Right ventricle myocardium inferior (tissue), 1 donor: ENCODE measurements at regions of chr19 and their contacts with region 1.

Region 1: DNA sequence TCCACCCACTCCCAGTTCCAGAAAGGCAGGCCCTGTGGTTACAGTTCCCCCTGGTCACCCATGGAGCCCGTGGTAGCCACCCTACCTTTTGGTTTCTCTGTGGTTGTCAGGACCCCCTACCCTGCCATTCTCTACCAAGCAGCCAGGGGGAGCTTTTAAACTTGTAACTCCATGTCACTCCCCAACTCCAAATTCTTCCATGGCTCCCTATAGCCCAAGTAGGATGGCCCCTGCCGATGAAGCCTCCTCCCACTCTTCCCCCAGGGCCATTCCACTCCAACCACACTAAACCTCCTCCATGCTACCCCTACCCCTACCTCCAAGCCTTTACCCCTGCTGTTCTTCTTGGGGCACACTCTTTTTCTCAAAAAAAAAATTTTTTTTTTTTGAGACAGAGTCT is 2.2 kb downstream of the S1PR2 start:
- DNase-seq: no peak
- ATAC-seq: no peak

Region 2: GRCh38 chr19:10191347-10191746 is 37.6 kb before region 1 on chr19:
- intact Hi-C with region 1: no loop called
- DNase-seq: no peak
- ATAC-seq: no peak

Region 3: DNA sequence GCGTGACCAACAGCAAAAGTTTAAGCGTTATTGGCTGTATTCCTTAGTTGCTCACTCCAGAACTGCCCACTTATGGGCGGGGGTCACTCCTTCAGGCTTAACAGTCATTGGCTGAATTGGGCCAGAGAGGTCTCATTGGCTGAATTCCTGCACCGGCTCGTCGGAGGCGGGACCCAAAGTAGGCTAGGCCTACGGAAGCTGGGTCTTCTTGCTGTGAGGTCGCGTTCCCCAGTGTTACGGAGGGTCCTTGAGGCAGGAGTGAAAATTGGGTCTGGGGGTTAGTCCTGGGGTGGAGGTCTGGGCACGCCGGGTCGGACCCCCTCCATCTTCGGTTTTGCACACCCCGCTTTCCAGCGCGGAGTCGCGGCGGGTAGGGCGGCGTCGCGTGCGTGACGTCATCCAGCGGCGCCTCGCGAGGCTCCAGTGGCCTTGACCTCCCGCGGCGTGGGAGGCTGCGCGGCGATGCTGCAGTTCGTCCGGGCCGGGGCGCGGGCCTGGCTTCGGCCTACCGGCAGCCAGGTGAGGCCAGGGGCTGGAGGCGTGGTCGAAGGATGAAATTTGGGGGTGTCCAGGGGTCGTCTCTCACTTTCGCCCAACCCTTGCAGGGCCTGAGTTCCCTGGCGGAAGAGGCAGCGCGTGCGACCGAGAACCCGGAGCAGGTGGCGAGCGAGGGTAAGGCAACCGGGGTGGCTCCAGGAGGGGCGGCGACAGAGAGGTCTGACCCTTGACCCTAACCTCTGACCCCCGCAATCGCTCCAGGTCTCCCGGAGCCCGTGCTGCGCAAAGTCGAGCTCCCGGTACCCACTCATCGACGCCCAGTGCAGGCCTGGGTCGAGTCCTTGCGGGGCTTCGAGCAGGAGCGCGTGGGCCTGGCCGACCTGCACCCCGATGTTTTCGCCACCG is 23.1 kb after region 1 on chr19 and contains the start of gene MRPL4:
- intact Hi-C with region 1: loop called (anchors 1 kb)
- DNase-seq: peak; percentile 96
- ATAC-seq: peak; percentile 94
- total RNA-seq, gene MRPL4: 70.1 TPM